WTC11 (cell line): ENCODE measurements at regions of chr11 and their contacts with region 1.

Region 1: GRCh38 chr11:57249384-57250319 is 12.6 kb upstream of the APLNR start:
- DNase-seq: peak; percentile 74
- ATAC-seq: peak; percentile 15; the same call in 1 of the 2 replicates
- H3K4me3 Mint-ChIP-seq: no peak overlapping the region
- H3K27ac Mint-ChIP-seq: no peak overlapping the region
- H3K4me1 Mint-ChIP-seq: no peaks in the 10 kb centered on the region; the same call in 1 of the 2 replicates
- H3K27me3 Mint-ChIP-seq: no peaks in the 10 kb centered on the region
- CTCF ChIP-seq: peak; percentile 85

Region 2: GRCh38 chr11:57116654-57117053 is 133.0 kb before region 1 on chr11:
- CTCF ChIA-PET with region 1: interaction called, 233 read pairs
- POLR2A ChIA-PET with region 1: interaction called, 3 read pairs
- DNase-seq: peak; percentile 32
- ATAC-seq: peak; percentile 86
- H3K4me3 Mint-ChIP-seq: no peak overlapping the region
- H3K27ac Mint-ChIP-seq: no peak overlapping the region
- H3K4me1 Mint-ChIP-seq: peaks cover 20% of the 10 kb centered on the region
- H3K27me3 Mint-ChIP-seq: no peaks in the 10 kb centered on the region; the same call in 1 of the 2 replicates
- CTCF ChIP-seq: no peak; the same call in 1 of the 2 replicates

Region 3: DNA sequence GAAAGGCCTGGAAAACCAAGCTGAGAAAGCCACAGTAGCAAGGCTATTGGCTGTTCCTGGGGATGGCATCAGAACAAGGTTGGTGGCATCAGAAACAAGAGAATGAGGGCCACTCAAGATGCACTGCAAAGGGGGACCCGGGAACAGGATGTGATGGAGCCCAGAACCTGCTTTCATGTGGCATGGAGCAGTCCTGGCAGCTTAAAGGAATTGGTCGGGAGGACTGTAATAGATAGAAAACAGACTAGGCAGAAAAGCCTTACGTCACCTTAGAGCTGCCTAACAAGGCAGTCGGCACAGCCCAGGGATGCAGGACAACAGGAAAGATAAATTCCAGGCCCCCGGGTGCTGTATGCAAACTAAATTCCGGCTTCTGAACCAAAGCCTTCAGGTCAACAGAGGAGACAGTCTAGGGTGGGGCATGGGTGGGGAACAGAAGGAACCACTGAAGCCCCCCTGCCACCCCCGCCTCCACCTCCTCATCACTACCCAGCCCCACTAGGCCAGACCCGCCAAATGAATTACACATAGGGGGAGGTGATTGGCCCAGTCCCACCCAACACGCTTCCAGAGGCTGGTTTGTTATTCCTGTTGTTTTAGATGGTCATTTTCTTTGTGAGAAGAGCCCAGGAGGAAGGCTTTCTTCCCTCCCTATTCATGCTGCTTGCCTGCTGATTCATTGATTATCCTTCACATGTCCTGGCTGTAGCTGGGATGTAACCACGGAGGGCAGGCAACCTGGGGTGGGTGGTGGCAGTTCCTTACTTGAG is 93.6 kb before region 1 on chr11:
- CTCF ChIA-PET with region 1: interaction called, 31 read pairs
- POLR2A ChIA-PET with region 1: interaction called, 6 read pairs
- DNase-seq: no peak
- ATAC-seq: peak; percentile 81
- H3K4me3 Mint-ChIP-seq: no peak overlapping the region
- H3K27ac Mint-ChIP-seq: no peak overlapping the region; the same call in 1 of the 2 replicates
- H3K4me1 Mint-ChIP-seq: peaks cover 31% of the 10 kb centered on the region
- H3K27me3 Mint-ChIP-seq: peaks cover 5% of the 10 kb centered on the region
- CTCF ChIP-seq: no peak

Region 4: DNA sequence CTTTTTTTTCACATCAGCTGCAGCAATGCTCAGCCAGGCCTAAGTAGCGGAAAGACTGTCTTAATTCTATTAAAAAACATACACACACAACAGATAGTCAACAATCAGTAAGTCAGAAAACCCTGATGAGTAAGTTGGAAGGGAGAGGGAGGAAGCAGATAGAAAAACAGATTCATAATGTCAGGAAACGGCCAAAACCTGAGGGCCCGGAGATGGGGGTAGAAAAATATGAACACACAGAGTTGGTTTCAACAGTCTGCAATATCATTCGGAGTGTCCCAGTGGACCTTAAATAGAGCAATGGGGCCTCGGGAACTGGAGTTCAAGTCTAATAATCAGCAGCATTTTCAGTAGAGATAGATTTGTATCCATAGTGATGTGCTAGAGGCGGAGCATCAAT is 53.1 kb before region 1 on chr11:
- CTCF ChIA-PET with region 1: interaction called, 11 read pairs
- POLR2A ChIA-PET with region 1: no interaction called
- DNase-seq: no peak
- ATAC-seq: no peak
- H3K4me3 Mint-ChIP-seq: no peak overlapping the region
- H3K27ac Mint-ChIP-seq: no peak overlapping the region
- H3K4me1 Mint-ChIP-seq: peaks cover 25% of the 10 kb centered on the region
- H3K27me3 Mint-ChIP-seq: no peaks in the 10 kb centered on the region; the same call in 1 of the 2 replicates
- CTCF ChIP-seq: no peak

Region 5: DNA sequence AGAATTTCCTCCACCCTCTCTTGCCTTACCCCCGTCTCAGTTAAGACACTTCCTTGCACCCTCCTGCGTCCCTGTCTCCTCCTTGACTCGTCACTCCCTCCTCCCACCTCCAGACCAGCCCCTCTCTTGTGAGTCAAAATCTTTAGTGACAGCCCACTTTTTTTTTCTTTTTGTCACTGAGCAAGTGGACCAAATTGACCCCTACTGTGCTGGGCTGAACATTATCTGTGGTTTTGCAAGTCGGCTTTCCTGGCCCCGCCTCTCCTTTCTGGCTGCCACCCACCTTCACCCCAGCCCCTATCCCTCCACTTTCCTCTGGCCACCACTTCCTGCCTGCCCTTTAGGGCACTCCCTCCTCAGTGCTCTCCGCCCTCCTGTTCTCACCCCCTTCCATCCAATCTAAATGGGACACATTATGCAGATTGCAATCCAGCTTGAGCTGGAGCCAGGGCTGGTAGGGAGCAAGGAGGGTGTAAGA is 12.4 kb before region 1 on chr11 and contains the start of gene APLNR:
- CTCF ChIA-PET with region 1: interaction called, 72 read pairs
- POLR2A ChIA-PET with region 1: no interaction called
- DNase-seq: no peak
- ATAC-seq: peak; percentile 83
- H3K4me3 Mint-ChIP-seq: no peak within 1 kb of the TSS
- H3K27ac Mint-ChIP-seq: no peak within 1 kb of the TSS
- H3K4me1 Mint-ChIP-seq: peaks cover 48% of the 10 kb centered on the region
- H3K27me3 Mint-ChIP-seq: peaks cover 6% of the 10 kb centered on the region
- CTCF ChIP-seq: no peak
- total RNA-seq, gene APLNR: 0.53 to 0.89 TPM (median 0.66 TPM) in 3 replicates

Region 6: DNA sequence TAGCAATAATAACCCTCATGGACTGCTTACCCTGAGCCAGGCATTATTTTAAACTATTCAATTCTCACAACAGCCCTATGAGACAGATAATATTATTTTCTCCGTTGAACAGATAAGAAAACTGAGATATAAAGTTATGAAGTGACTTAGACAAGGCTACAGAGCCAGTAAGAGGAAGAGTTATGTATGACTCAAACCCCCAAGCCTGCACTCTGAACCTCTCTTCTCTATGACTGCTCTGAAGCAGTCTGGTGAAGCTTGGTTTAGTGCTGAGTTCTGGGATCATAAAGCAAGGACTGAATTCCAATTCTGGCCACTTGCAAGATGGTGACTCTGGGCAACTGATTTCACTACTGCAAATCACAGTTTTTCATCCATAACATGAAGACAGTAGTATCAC is 40.6 kb after region 1 on chr11:
- CTCF ChIA-PET with region 1: interaction called, 10 read pairs
- POLR2A ChIA-PET with region 1: no interaction called
- DNase-seq: no peak
- ATAC-seq: no peak
- H3K4me3 Mint-ChIP-seq: no peak overlapping the region
- H3K27ac Mint-ChIP-seq: no peak overlapping the region
- H3K4me1 Mint-ChIP-seq: peaks cover 28% of the 10 kb centered on the region
- H3K27me3 Mint-ChIP-seq: peaks cover 2% of the 10 kb centered on the region
- CTCF ChIP-seq: no peak

Region 7: GRCh38 chr11:57515332-57516060 is 265.8 kb after region 1 on chr11 and contains the start of gene SLC43A1:
- CTCF ChIA-PET with region 1: no interaction called
- POLR2A ChIA-PET with region 1: no interaction called
- DNase-seq: peak; percentile 54
- ATAC-seq: peak; percentile 29
- H3K4me3 Mint-ChIP-seq: peak within 1 kb of the TSS; percentile 93
- H3K27ac Mint-ChIP-seq: no peak within 1 kb of the TSS
- H3K4me1 Mint-ChIP-seq: peaks cover 20% of the 10 kb centered on the region
- H3K27me3 Mint-ChIP-seq: peaks cover 22% of the 10 kb centered on the region
- CTCF ChIP-seq: no peak
- total RNA-seq, gene SLC43A1: 20.5 to 27.1 TPM (median 21.5 TPM) in 3 replicates